Ascending aorta (tissue), 2 donors: ENCODE measurements at regions of chr3 and their contacts with region 1.

Region 1: DNA sequence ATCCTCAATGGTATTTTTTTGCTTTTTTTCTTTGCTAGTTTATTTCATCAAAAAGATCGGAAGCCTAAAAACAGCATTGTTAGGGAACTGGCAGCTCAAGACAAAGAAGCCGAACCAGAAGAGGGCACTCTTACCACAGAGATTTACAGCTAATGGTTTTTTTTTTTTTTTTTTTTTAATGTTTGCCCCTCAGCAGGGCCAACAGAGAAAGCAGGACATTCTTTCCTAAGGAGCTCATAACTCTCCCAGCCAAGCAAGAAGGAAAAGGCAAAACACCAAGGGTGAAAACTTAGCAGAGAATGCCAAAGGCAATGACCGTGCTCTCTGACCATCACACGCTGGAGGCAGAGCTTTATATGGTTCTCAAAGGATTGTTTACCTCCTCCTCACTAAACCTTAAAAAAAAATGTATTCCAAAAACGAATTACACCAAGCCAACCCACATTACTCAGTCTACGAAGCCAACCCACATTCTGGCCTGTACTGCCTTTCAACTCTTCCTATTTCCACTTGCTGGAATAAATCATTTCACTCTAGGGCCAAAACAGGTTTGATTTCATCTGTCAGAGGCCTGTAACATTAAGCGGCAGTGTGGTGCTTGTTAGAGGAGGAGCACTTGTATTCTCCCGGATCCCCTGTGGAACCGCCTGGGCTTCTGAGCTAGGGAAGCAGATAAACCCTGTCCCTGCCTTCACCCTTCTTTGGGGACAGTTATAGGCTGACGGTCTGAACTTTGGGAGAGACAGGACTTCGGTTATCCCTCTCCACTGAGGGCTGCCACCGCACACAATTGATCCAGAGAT is 35.6 kb upstream of the GYG1 start:
- DNase-seq: peak; percentile 16 to 89
- H3K4me3 ChIP-seq: no peak overlapping the region
- H3K27ac ChIP-seq: peak overlapping the region; percentile 89 to 98
- H3K4me1 ChIP-seq: peaks cover 5 to 28% of the 10 kb centered on the region in 2 donors
- H3K27me3 ChIP-seq: no peaks in the 10 kb centered on the region
- CTCF ChIP-seq: peak; percentile 52 to 66 (median 54)

Region 2: DNA sequence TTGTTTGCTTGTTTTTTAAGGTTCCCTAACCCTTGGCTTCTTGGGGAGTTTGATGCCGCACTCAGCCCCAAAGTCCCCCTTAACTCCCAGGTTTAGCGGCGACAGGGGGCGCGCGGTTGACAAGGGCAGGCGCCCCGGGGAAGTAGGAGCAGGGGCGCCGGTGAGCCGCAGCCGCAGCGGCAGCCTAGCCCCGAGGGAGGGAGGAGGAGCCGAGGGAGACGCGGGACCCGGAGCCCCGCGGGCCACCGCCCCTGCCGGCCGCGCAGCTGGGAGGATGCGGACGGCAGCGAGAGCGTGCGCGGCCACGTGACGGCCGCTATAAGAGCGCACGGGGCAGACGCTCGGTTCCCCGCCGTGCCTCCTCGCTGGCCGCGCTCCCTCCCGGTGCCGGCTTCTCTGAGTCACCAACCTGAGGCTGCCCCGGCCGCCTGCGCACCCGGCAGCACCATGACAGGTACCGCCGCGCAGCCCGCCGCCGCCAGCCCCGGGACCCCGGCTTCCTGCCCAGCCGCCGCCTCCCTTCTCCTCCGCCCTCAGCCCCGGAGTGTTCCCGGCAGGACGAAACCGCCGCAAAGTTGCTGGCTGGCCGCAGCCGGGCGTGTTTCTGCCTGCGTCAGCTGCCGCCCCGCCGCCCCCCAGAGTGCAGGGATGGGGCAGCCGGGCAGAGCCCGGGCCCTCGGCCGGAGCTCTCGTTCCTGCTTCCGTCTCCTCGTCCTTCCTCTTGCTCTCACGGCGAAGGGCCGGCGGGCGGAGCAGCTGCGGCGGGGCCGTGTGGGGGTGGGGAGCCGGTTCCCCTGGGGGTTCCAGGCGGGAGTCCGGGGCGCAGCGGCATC is 35.7 kb after region 1 on chr3 and contains the start of gene GYG1:
- intact Hi-C with region 1: loop called (anchors 2 kb)
- DNase-seq: peak in 1 of 2 donors; percentile 93
- H3K4me3 ChIP-seq: peak within 1 kb of the TSS; percentile 69 to 94
- H3K27ac ChIP-seq: peak within 1 kb of the TSS; percentile 91 to 100
- H3K4me1 ChIP-seq: peaks cover 5 to 16% of the 10 kb centered on the region in 2 donors
- H3K27me3 ChIP-seq: no peaks in the 10 kb centered on the region
- CTCF ChIP-seq: peak in 2 of 3 experiments; percentile 22 to 47
- total RNA-seq, gene GYG1: 23.9 TPM

Region 3: GRCh38 chr3:149120051-149120972 is 164.6 kb after region 1 on chr3:
- intact Hi-C with region 1: loop called (anchors 2 kb)
- DNase-seq: no peak
- H3K4me3 ChIP-seq: no peak overlapping the region
- H3K27ac ChIP-seq: no peak overlapping the region
- H3K4me1 ChIP-seq: peaks cover 0 to 3% of the 10 kb centered on the region in 2 donors
- H3K27me3 ChIP-seq: no peaks in the 10 kb centered on the region
- CTCF ChIP-seq: peak; percentile 51 to 71 (median 66)

Region 4: GRCh38 chr3:149180057-149180573 is 224.4 kb after region 1 on chr3:
- intact Hi-C with region 1: loop called (anchors 5 kb)
- DNase-seq: peak; percentile 78 to 95
- H3K4me3 ChIP-seq: no peak overlapping the region
- H3K27ac ChIP-seq: peak overlapping the region; percentile 35 to 64
- H3K4me1 ChIP-seq: peaks cover 0 to 15% of the 10 kb centered on the region in 2 donors
- H3K27me3 ChIP-seq: no peaks in the 10 kb centered on the region
- CTCF ChIP-seq: no peak

Region 5: DNA sequence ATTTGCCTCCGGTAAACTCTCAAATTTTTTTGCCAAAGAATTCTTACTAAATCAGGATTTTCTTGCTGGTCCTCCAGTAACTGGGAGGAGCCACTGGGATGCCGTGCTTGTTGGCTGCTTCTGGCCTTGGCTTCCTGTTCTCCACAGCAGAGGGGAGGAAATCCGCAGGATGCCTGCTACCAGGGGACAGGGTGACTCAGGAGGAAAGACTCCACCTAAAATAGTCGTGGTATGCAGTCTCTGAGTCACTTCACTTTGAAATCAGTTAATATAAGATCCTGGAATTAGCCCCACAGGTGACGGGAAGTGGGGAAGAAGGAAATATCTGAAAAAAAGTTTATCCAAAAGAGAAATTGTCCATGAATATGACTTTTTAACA is 384.2 kb after region 1 on chr3:
- intact Hi-C with region 1: loop called (anchors 10 kb)
- DNase-seq: peak; percentile 65 to 96
- H3K4me3 ChIP-seq: no peak overlapping the region
- H3K27ac ChIP-seq: peak overlapping the region; percentile 72 to 78
- H3K4me1 ChIP-seq: peaks cover 0 to 17% of the 10 kb centered on the region in 2 donors
- H3K27me3 ChIP-seq: no peaks in the 10 kb centered on the region
- CTCF ChIP-seq: no peak